Caco-2 (cell line): ENCODE measurements at regions of chr20 and their contacts with region 1.

Region 1: DNA sequence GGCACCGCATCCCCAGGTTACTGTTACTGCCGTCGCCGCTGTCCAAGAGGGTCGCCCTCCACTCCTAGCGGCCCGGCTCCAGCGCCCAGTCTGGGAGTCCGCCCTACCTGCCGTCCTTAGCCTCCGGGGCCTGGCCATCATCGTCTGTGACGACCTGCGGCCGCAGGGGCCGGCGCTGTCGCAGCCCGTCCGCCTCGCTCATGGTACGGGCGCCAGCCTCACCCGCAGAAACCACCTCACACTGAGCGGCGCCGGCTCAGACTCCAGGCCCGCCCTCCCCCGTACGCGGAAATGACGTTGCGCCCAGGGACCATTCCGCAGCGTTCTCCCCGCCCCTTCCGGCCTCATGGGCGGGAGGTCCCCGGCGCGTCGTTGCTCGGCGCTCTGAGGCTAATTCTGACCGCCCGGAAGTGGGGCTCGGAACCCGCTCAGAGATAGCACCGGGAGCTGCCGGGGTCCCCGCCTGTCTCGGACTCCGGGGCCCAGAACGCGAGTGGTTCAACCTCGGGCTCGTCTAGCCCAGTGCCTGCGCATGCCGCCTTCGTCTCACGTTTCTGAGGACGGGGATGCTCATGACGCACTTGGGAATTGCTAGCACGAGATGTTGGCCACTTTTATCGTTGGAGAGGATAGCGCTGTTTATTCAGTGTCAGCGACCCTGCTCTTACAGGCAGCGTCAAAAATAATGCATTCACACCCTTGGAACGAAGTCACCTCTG is at the start of gene APMAP:
- DNase-seq: peak; percentile 92 to 96
- H3K4me3 ChIP-seq: peak within 1 kb of the TSS; percentile 78
- H3K4me3 Mint-ChIP-seq: peak within 1 kb of the TSS; percentile 93
- H3K27ac Mint-ChIP-seq: peak within 1 kb of the TSS; percentile 95
- H3K4me1 ChIP-seq: peaks cover 34% of the 10 kb centered on the region
- H3K4me1 Mint-ChIP-seq: peaks cover 35% of the 10 kb centered on the region
- H3K27me3 ChIP-seq: no peaks in the 10 kb centered on the region
- H3K27me3 Mint-ChIP-seq: no peaks in the 10 kb centered on the region
- CTCF ChIP-seq: no peak
- total RNA-seq, gene APMAP: 119 and 138 TPM in 2 replicates

Region 2: GRCh38 chr20:24465730-24466129 is 526.9 kb before region 1 on chr20:
- CTCF ChIA-PET with region 1: no interaction called
- POLR2A ChIA-PET with region 1: no interaction called
- intact Hi-C with region 1: no loop called
- DNase-seq: no peak
- H3K4me3 ChIP-seq: no peak overlapping the region
- H3K4me3 Mint-ChIP-seq: no peak overlapping the region
- H3K27ac Mint-ChIP-seq: no peak overlapping the region
- H3K4me1 ChIP-seq: no peaks in the 10 kb centered on the region
- H3K4me1 Mint-ChIP-seq: no peaks in the 10 kb centered on the region
- H3K27me3 ChIP-seq: peaks cover 2% of the 10 kb centered on the region; the same call in 1 of the 2 replicates
- H3K27me3 Mint-ChIP-seq: peaks cover 26% of the 10 kb centered on the region
- CTCF ChIP-seq: no peak

Region 3: GRCh38 chr20:24934101-24934661 is 58.5 kb before region 1 on chr20:
- CTCF ChIA-PET with region 1: interaction called, 4 read pairs
- POLR2A ChIA-PET with region 1: no interaction called
- intact Hi-C with region 1: loop called (anchors 1 kb)
- DNase-seq: no peak
- H3K4me3 ChIP-seq: no peak overlapping the region
- H3K4me3 Mint-ChIP-seq: no peak overlapping the region
- H3K27ac Mint-ChIP-seq: no peak overlapping the region
- H3K4me1 ChIP-seq: peaks cover 14% of the 10 kb centered on the region
- H3K4me1 Mint-ChIP-seq: peaks cover 21% of the 10 kb centered on the region
- H3K27me3 ChIP-seq: no peaks in the 10 kb centered on the region
- H3K27me3 Mint-ChIP-seq: no peaks in the 10 kb centered on the region
- CTCF ChIP-seq: no peak

Region 4: DNA sequence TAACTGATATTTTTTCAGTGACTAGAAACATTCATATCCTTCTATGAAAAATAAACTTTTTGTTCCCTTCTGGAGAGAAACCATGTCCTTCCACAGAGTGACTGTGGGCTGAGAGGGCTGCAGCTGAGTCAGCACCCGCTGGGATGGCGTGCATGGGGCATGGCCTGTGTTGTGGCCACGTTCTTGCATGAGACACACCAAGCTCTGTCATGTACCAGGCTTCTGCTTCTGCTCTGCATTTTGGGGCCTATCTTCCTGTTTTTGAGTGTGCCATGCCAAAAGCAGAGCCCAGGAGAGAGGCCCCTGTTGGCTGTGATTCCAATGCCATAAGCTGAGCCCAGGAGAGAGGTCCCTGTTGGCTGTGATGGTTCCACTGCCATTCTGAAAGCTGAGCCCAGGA is 10.9 kb before region 1 on chr20:
- CTCF ChIA-PET with region 1: no interaction called
- POLR2A ChIA-PET with region 1: no interaction called
- intact Hi-C with region 1: no loop called
- DNase-seq: no peak
- H3K4me3 ChIP-seq: no peak overlapping the region
- H3K4me3 Mint-ChIP-seq: no peak overlapping the region
- H3K27ac Mint-ChIP-seq: no peak overlapping the region
- H3K4me1 ChIP-seq: no peaks in the 10 kb centered on the region
- H3K4me1 Mint-ChIP-seq: no peaks in the 10 kb centered on the region
- H3K27me3 ChIP-seq: no peaks in the 10 kb centered on the region
- H3K27me3 Mint-ChIP-seq: no peaks in the 10 kb centered on the region
- CTCF ChIP-seq: no peak

Region 5: GRCh38 chr20:25178563-25179438 is 186.2 kb after region 1 on chr20:
- CTCF ChIA-PET with region 1: interaction called, 3 read pairs
- POLR2A ChIA-PET with region 1: no interaction called
- intact Hi-C with region 1: loop called (anchors 1 kb)
- DNase-seq: peak; percentile 55 to 69
- H3K4me3 ChIP-seq: no peak overlapping the region
- H3K4me3 Mint-ChIP-seq: no peak overlapping the region
- H3K27ac Mint-ChIP-seq: no peak overlapping the region
- H3K4me1 ChIP-seq: peaks cover 2% of the 10 kb centered on the region; the same call in 1 of the 2 replicates
- H3K4me1 Mint-ChIP-seq: no peaks in the 10 kb centered on the region
- H3K27me3 ChIP-seq: no peaks in the 10 kb centered on the region
- H3K27me3 Mint-ChIP-seq: no peaks in the 10 kb centered on the region
- CTCF ChIP-seq: peak; percentile 84 to 85

Region 6: DNA sequence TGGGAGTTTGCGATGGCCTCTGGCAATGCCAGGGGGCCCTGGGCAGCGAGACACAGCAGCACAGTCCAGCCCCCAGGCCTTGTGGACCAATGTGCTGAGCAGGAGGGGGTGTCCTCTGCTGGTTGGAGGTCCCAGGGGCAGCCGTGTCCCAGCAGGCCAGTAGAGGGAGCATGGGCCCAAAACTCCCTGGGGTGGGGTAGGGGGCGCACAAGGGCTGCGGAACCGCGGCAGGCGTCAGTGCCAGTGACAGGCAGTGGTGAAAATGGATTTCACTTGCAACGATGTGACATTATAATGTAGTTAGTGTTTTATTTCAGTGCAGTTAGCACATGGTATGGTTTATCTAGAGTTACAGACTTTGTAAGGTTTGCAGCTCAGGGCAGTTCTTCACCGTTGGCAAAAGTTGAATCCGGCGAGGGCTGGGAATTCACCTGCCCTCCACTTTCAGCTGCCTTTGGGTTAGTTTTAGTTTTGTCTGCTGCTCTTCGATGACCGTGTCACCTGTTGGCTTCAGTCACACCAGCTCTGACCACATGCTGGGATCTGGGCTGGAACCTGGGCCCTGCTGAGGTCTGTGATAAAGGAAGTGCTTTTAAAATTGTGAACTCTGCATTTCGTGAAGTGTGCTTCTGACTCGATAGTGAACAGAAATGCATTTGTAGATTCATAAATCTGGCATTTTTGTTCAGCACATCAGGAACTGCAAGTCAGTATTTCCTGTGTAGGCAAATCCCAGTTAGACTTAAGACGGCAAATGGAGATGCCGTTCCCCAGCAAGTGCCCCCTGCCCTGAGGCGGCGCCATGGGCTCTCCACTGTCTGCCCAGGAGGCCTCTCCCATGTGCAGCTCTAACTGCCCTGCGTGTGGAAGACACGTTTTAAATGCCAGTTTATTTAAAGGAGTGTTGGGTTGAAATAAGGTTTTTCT is 302.1 kb after region 1 on chr20:
- CTCF ChIA-PET with region 1: interaction called, 3 read pairs
- POLR2A ChIA-PET with region 1: no interaction called
- intact Hi-C with region 1: loop called (anchors 2 kb)
- DNase-seq: peak; percentile 75 to 86
- H3K4me3 ChIP-seq: no peak overlapping the region
- H3K4me3 Mint-ChIP-seq: no peak overlapping the region
- H3K27ac Mint-ChIP-seq: no peak overlapping the region
- H3K4me1 ChIP-seq: no peaks in the 10 kb centered on the region
- H3K4me1 Mint-ChIP-seq: no peaks in the 10 kb centered on the region
- H3K27me3 ChIP-seq: no peaks in the 10 kb centered on the region
- H3K27me3 Mint-ChIP-seq: no peaks in the 10 kb centered on the region
- CTCF ChIP-seq: peak; percentile 92 to 99

Region 7: DNA sequence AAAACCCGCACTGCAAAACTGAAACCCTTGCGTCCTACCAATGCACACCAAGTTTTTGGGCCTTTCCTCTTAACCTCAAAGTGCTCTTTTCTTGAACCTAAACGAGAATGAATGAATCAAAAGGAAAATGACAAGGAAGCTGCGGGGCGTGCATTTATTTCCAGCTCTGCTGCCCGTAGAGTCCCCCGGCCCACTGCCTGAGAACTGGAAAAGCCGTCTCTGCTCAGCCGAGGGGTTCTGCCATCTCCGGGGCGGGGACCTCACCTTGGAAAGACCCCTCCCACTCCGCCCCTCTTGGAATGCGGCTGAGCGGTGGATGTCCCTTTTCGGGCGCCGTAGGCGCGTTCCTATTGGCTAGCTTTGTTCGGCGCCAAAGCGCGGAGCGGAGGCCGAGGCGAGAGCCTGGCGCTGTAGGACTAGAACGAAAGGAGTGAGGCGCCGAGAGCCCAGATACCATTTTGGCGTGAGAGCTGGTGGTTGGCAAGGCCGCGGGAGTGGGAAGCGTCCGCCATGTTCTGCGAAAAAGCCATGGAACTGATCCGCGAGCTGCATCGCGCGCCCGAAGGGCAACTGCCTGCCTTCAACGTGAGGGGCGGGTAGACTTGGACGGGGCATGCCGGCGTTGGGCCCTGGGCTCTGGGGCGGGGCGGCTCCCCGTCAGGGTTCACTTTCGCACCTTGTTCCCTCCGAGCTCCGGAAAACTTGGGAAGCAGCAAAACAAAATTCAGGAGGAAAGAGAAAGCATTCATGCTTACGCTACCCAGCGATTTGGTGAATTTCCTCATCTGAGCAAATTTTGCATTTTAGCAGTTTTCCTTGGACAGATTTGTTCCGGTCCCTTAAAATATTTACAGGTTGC is 414.9 kb after region 1 on chr20 and contains the start of gene GINS1:
- CTCF ChIA-PET with region 1: no interaction called
- POLR2A ChIA-PET with region 1: no interaction called
- intact Hi-C with region 1: loop called (anchors 10 kb)
- DNase-seq: peak; percentile 98
- H3K4me3 ChIP-seq: peak within 1 kb of the TSS; percentile 69
- H3K4me3 Mint-ChIP-seq: peak within 1 kb of the TSS; percentile 96
- H3K27ac Mint-ChIP-seq: peak within 1 kb of the TSS; percentile 99
- H3K4me1 ChIP-seq: 0 out of 2 replicates have a peak, but pooled peaks cover 3% of the 10 kb centered on the region
- H3K4me1 Mint-ChIP-seq: peaks cover 11% of the 10 kb centered on the region
- H3K27me3 ChIP-seq: no peaks in the 10 kb centered on the region
- H3K27me3 Mint-ChIP-seq: no peaks in the 10 kb centered on the region
- CTCF ChIP-seq: no peak
- total RNA-seq, gene GINS1: 48.7 and 50.9 TPM in 2 replicates